ENCODE measurements at regions of chr11 and their contacts with region 1.

Region 1: GRCh38 chr11:109697140-109697843 is 275.3 kb downstream of the C11orf87 start:
- DNase-seq: peak; percentile 34
- CTCF ChIP-seq: peak; percentile 87

Region 2: GRCh38 chr11:108697872-108698473 is 999.3 kb before region 1 on chr11:
- in situ Hi-C with region 1: loop called (anchors 10 kb)
- DNase-seq: peak; percentile 73
- CTCF ChIP-seq: peak; percentile 96